ENCODE measurements at regions of chr14 and their contacts with region 1.

Region 1: DNA sequence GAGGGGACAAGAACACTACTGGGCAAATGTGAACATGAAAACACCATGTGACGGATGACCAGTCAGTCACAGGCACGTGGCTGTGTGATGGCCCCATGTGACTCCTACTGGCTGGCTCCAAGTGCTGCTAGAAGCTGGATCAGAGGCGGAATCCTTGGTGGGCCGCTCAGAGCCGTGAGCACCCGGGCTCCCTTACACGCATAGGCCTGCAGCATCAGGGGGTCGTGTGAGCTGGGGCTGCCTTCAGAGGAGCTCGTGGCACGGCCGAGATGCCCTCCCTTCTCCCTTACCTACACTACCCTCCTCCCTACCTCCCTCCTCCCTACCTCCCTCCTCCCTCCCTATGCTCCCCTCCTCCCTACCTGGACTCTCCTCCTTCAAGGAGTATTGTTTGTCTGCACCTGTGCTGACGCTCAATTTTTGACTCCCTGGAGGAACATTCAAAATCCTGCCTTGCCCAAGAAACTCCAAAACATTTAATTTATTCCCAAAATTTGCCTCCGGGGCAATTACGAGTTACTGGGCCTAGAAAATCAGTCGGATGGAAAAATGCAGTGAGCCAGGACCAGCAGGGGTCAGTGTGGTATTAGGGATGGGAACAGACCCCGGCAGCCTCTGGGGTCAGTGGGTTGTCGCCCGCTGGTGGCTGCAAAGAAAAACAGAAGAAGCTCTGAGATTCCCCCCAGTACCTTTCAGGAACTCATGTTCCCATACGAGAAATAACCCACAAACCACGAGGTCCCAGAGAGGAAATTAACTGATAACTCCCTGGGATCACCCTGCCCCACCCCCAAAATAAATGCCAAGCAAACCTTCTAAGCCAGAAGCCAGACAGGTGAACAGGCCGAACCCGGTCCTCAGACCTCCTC is 61.2 kb downstream of the C14orf132 start:
- DNase-seq: peak; percentile 66 to 94
- H3K4me3 ChIP-seq: no peak overlapping the region
- CTCF ChIP-seq: peak in 2 of 3 donors; percentile 31 to 43
- POLR2A ChIP-seq: no peak

Region 2: GRCh38 chr14:95895720-95896119 is 204.7 kb before region 1 on chr14:
- intact Hi-C with region 1: no loop called
- DNase-seq: no peak
- H3K4me3 ChIP-seq: no peak overlapping the region
- CTCF ChIP-seq: no peak
- POLR2A ChIP-seq: no peak

Region 3: DNA sequence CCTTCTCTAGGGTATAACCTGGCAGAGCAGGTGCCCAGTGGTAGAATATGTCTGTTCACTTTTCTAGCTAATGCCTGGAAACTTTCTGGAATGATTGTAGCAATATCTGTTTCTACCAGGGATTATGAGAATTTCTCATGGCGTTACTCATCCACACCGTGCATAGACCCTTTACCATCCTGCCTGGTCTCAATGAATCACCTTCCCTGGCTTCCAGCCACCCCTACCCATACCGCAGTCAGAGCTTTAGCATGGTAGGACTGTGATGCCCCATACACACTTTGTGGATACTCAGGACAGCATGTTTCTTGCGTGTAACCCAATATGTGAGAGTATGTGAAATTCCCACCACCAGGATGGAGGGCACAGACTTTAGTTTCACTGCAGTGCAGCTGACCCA is 178.3 kb before region 1 on chr14:
- intact Hi-C with region 1: no loop called
- DNase-seq: no peak
- H3K4me3 ChIP-seq: no peak overlapping the region
- CTCF ChIP-seq: no peak
- POLR2A ChIP-seq: no peak

Region 4: GRCh38 chr14:95993768-95994592 is 106.4 kb before region 1 on chr14:
- intact Hi-C with region 1: loop called (anchors 5 kb)
- DNase-seq: no peak
- H3K4me3 ChIP-seq: no peak overlapping the region
- CTCF ChIP-seq: no peak
- POLR2A ChIP-seq: no peak

Region 5: DNA sequence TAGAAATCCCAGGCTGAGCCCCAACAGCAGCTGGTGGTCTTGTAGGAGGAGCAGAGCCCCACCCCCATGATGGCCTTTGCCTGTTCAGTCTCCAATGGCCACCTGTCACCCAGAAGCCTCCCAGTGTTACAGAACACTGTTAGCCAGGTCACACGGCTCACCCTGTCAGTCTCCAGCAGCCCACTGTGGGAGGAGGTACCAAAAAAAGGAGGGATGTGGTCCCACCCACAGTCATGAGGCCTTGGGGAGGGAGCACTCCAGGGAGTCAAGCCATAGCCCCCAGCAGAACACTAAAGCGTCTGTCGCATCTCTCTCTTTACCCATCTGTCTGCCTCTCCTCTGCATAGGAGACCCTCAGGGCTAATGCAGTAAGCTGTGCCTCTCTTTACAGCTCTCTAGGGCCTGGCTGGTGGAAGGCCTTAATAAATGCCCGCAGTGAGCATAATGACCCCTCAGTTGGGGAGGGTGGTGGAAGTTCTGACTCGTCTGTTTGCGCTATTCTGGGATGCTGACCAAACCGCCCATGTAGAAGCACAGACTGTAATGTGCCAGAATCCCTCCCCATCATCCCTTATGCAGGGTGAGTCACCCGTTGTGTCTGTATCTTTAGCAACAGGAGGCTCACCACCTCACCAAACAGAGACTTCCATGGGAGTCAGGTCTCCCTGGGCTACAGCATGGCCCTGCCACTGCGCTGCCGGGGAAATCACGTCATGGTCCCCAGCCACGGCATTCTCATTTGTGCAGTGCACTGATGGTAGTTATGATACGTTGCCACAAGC is 46.6 kb before region 1 on chr14:
- intact Hi-C with region 1: loop called (anchors 2 kb)
- DNase-seq: peak; percentile 76 to 87
- H3K4me3 ChIP-seq: no peak overlapping the region
- CTCF ChIP-seq: no peak
- POLR2A ChIP-seq: no peak

Region 6: DNA sequence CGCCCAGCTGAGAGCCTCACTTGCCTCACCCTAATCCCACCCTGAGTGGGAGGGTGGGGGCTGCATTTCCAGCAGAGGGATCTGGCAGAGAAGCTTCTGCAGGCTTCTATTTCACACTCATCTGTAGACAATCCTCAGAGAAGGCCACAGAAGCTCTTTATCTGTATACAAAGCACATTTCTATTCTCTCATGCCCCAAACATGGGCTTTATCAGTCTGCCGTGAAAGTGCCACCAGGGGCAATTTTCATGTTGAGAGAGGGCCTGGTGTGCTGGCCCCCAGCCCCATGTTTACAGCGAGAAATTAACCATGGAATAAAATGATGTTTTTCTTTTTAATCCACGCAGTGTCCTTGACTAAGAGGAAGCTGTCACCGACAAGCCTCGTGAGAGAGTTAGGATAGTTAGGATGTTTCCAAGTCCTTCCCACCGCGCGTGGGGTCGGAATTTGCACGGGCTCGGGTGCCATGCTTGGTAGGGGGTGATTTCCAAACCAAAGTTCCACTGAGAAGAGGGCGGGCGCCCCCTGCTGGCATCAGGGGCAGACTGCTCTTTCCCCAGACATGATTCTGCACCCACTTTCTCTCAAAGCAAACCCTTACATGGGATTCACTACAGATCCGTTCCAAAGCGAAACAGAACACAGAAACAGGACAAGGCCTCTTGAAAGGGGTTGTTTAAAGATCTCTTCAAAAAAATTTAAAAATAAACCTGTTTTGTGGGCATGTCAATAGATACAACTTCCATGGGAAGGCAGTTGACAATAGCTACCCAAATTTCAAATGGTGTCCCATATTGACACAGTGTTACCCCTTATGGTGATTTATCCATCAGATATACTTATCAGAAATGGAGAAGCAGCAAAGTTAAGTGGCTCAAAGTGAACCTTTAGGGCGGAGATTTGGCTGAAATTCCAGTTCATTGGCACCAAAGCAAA is 175.1 kb after region 1 on chr14:
- intact Hi-C with region 1: loop called (anchors 5 kb)
- DNase-seq: peak; percentile 49 to 95
- H3K4me3 ChIP-seq: no peak overlapping the region
- CTCF ChIP-seq: peak in 1 of 3 donors; percentile 93
- POLR2A ChIP-seq: no peak

Region 7: GRCh38 chr14:96424109-96424989 is 324.0 kb after region 1 on chr14:
- intact Hi-C with region 1: loop called (anchors 10 kb)
- DNase-seq: no peak
- H3K4me3 ChIP-seq: no peak overlapping the region
- CTCF ChIP-seq: peak in 1 of 3 donors; percentile 31
- POLR2A ChIP-seq: no peak